Spleen (tissue), 13 donors: ENCODE measurements at regions of chr19 and their contacts with region 1.

Region 1: GRCh38 chr19:45059278-45059965 is 16.9 kb downstream of the ZNF296 start:
- DNase-seq: peak; percentile 91
- H3K4me3 ChIP-seq: no peak overlapping the region
- H3K27ac ChIP-seq: peak overlapping the region in 2 of 8 donors; percentile 25 to 59
- H3K4me1 ChIP-seq: peaks cover 0 to 28% (median 6%) of the 10 kb centered on the region in 6 donors
- H3K27me3 ChIP-seq: no peaks in the 10 kb centered on the region
- CTCF ChIP-seq: peak; percentile 48 to 91 (median 84)
- POLR2A ChIP-seq: no peak

Region 2: DNA sequence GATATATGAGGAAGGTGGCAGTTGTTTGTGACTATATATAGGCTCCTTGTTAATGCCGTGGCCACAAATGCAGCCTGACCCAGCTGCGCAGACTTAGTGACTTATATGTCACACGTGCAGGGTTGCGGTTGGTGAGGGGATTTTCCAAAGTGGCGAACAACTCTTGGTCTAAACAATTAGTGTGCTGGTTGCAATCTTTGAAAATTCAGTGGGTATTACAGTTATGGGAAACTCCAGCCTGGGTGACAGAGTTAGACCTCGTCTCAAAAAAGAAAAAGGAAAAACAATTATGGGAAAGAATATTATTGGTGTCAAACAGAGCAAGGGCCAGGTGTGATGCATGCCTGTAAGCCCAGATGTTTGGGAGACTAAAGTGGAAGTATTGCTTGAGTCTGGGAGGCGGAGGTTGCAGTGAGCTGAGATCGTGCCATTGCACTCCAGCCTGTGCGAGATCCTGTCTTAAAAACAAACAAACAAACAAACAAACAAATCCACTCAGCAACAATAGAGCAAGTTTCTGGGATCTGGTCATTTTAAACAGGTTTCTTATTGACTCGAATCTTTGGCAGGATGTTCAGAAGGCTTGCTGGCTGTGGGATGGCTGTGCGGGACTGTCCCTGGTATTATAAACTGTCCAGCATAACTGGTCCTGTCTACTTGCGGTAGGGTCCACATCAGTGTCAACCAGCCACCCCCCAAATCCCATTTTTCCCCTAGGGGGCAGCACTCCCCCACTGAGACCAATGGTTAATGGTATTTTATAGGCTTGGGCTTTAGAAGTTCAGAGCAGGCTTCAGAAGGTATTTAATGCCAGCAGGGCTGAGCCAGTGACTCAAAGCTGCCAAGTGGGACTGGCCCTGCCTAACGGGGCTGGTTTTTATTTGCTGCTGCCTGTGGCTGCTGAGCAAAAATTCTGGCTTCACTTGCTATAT is 42.8 kb before region 1 on chr19:
- intact Hi-C with region 1: loop called (anchors 5 kb)
- DNase-seq: peak; percentile 86
- H3K4me3 ChIP-seq: peak overlapping the region in 1 of 8 donors; percentile 30
- H3K27ac ChIP-seq: peak overlapping the region; percentile 9 to 79 (median 66)
- H3K4me1 ChIP-seq: peaks cover 2 to 20% (median 17%) of the 10 kb centered on the region in 6 donors
- H3K27me3 ChIP-seq: no peaks in the 10 kb centered on the region
- CTCF ChIP-seq: peak; percentile 38 to 82 (median 67)
- POLR2A ChIP-seq: no peak